GM18951 (cell line): ENCODE measurements at regions of chr6 and their contacts with region 1.

Region 1: GRCh38 chr6:52419809-52420670 is at the start of gene EFHC1:
- POLR2A ChIP-seq: peak; percentile 96

Region 2: DNA sequence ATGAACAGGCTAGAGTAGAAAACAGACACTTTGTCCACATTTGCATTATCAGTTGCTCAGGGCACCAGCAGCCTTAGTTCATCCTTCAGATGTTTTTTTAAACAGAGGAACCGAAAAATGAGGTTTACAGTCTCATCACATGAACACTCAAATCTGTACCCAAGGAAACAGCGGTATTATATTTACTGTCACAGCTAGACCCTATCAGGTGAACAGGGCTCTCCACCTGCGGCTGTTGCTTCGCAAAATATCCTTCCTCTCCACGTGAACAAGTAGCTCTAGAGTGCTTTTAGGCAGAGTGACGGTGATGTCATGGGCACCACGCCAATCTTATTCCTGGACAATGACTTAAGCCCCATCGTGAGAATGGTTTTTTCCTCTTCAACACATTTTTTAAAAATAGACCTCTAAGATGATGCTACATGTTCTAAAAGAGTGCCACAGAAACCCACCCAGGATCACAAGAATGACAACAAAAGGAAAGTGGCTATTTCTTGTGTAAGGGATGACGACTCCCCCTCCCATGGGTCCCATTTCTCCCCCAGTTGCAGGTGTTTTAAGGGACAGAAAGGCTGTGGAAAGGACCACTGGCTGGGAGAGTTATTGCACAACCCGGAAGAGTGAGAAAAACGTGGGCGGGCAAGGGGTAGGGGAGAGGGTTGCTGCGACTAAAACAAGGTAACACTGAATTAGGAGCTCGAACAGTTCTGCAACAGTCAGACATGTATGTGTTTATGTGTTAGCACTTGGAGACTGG is 77.8 kb after region 1 on chr6:
- in situ Hi-C with region 1: loop called (anchors 5 kb)
- POLR2A ChIP-seq: no peak

Region 3: DNA sequence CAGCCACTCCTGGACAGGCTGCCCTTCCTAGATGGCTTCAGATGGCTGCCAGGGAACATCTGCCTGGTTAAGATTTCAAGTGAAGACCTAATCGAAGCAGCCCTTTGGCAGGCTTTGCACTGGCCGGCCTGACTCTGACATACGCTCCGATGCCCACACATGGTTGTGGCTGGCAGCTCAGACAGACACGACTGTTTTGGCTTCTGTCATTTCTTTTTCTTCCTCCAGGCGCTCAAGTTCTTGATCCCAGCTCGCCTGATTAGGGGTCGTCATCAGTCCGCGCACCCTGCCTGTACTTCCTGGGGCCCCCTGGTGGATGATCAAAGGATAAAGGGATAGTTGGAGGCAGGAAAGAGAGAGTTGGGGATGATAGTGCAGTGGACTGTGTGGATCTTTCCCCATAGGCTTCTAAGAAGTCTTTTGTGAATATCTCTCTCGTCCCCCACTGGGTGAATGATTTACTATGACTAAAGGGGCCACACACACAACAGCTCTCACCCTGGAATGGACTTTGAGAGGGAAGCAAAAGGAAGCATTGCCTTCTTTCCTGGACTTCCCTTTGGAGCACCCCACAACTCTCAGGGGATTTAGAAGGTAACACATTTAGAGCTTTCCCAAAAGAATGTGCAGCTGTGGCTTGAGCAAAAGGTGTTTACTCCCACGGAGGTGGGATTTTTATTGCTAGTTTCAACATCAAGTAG is 178.2 kb after region 1 on chr6:
- in situ Hi-C with region 1: loop called (anchors 10 kb)
- POLR2A ChIP-seq: no peak

Region 4: DNA sequence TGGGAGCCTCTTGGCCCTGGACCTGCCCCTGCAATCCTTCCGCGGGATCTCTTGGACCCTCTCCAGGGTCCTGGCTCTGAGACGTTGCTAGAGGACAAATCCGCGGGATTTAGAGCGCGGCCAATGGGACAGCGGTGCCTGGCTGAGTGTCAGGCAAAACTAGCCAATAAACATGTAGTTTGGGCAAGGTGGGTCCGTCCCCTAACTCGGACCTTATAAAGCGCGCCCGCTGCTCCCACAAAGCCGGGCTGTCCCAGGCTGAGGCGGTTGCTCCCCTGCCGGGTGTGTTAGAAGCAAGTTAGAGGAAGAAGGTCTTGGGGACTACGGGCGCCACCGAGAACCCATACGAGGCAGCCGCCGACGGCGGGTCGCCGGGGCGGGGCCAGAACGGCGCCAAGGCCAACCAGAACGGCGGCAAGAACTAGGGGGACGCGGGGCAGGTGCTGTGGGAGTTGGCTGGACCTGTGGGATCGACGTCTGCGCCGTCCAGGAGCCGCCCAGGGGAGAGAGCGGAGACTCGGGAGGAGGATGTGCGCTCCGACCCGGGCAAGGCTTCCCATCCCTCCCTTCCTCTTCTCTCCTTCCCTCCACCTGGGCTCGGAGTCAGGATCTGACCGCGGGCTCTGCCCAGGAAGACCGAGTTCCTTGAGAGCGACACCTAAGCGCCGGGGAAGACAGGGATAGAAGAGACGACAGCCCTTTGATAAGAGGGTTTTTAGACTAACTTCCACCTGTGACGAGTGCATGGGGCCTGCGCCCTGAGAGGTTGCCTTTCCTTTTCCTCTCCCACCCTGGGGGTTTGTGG is 244.3 kb after region 1 on chr6:
- in situ Hi-C with region 1: loop called (anchors 5 kb)
- POLR2A ChIP-seq: peak; percentile 97